CD8-positive, alpha-beta T cell (primary cell): ENCODE measurements at regions of chr10 and their contacts with region 1.

Region 1: DNA sequence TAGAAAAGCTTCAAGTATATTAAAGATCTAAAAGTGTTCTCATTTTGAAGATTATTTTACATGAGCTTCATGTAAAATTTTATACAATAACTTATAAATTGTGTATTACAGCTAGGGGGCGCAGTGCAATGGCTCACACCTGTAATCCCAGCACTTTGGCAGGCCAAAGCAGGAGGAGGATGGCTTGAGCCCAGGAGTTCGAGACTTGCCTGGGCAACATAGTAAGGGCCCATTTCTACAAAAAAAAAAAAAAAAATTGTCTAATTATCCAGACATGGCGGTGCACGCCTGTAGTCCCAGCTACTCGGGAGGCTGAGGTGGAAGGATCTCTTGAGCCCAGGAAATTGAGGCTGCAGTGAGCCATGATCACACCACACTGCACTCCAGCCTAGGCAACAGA is 16.6 kb downstream of the ACBD5 start:
- DNase-seq: peak in 8 of 9 experiments; percentile 13 to 75 (median 46)
- ATAC-seq: no peak
- H3K4me3 ChIP-seq: no peak overlapping the region
- H3K4me3 Mint-ChIP-seq: no peak overlapping the region
- H3K27ac ChIP-seq: peak overlapping the region in 1 of 2 experiments; percentile 20
- H3K27ac Mint-ChIP-seq: peak overlapping the region; percentile 52
- H3K4me1 ChIP-seq: peaks cover 17% of the 10 kb centered on the region
- H3K4me1 Mint-ChIP-seq: peaks cover 28% of the 10 kb centered on the region
- H3K27me3 ChIP-seq: no peaks in the 10 kb centered on the region
- H3K27me3 Mint-ChIP-seq: no peaks in the 10 kb centered on the region
- CTCF ChIP-seq: peak; percentile 84

Region 2: GRCh38 chr10:26890956-26891355 is 333.0 kb before region 1 on chr10:
- CTCF ChIA-PET with region 1: no interaction called
- POLR2A ChIA-PET with region 1: no interaction called
- intact Hi-C with region 1: loop called in 1 of 2 experiments (anchors 2 kb)
- DNase-seq: peak in 5 of 9 experiments; percentile 11 to 51 (median 42)
- ATAC-seq: no peak
- H3K4me3 ChIP-seq: no peak overlapping the region
- H3K4me3 Mint-ChIP-seq: no peak overlapping the region
- H3K27ac ChIP-seq: no peak overlapping the region
- H3K27ac Mint-ChIP-seq: no peak overlapping the region
- H3K4me1 ChIP-seq: no peaks in the 10 kb centered on the region
- H3K4me1 Mint-ChIP-seq: no peaks in the 10 kb centered on the region
- H3K27me3 ChIP-seq: no peaks in the 10 kb centered on the region
- H3K27me3 Mint-ChIP-seq: peaks cover under 1% of the 10 kb centered on the region
- CTCF ChIP-seq: no peak

Region 3: DNA sequence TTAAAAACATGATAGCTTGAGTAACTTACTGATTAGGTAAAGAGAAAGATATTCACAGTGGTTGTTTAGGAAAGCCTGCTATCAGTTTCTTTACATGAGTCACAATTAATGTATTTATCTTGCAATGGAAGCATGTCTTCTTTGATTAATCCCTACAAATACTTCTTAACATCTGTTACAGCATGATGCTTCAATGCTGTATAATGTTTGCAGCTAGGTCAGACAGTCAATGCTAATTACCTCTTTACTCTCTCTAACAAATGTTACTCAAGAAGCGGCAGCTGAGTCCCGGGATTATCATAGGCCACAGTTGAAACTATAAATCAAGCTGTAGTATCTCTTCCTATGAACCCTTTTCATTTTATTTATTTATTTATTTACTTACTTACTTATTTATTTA is 16.6 kb before region 1 on chr10:
- CTCF ChIA-PET with region 1: interaction called, 10 read pairs
- POLR2A ChIA-PET with region 1: no interaction called
- intact Hi-C with region 1: no loop called
- DNase-seq: no peak
- ATAC-seq: no peak
- H3K4me3 ChIP-seq: no peak overlapping the region
- H3K4me3 Mint-ChIP-seq: no peak overlapping the region
- H3K27ac ChIP-seq: no peak overlapping the region
- H3K27ac Mint-ChIP-seq: no peak overlapping the region
- H3K4me1 ChIP-seq: no peaks in the 10 kb centered on the region
- H3K4me1 Mint-ChIP-seq: no peaks in the 10 kb centered on the region
- H3K27me3 ChIP-seq: no peaks in the 10 kb centered on the region
- H3K27me3 Mint-ChIP-seq: no peaks in the 10 kb centered on the region
- CTCF ChIP-seq: no peak

Region 4: GRCh38 chr10:27252267-27253000 is 28.5 kb after region 1 on chr10:
- CTCF ChIA-PET with region 1: interaction called, 14 read pairs
- POLR2A ChIA-PET with region 1: no interaction called
- intact Hi-C with region 1: no loop called
- DNase-seq: peak; percentile 58 to 92 (median 81)
- ATAC-seq: peak; percentile 86
- H3K4me3 ChIP-seq: peak overlapping the region; percentile 55 to 69
- H3K4me3 Mint-ChIP-seq: peak overlapping the region; percentile 76
- H3K27ac ChIP-seq: peak overlapping the region; percentile 60 to 75
- H3K27ac Mint-ChIP-seq: peak overlapping the region; percentile 92
- H3K4me1 ChIP-seq: peaks cover 14% of the 10 kb centered on the region
- H3K4me1 Mint-ChIP-seq: peaks cover 12% of the 10 kb centered on the region
- H3K27me3 ChIP-seq: no peaks in the 10 kb centered on the region
- H3K27me3 Mint-ChIP-seq: no peaks in the 10 kb centered on the region
- CTCF ChIP-seq: peak; percentile 84

Region 5: DNA sequence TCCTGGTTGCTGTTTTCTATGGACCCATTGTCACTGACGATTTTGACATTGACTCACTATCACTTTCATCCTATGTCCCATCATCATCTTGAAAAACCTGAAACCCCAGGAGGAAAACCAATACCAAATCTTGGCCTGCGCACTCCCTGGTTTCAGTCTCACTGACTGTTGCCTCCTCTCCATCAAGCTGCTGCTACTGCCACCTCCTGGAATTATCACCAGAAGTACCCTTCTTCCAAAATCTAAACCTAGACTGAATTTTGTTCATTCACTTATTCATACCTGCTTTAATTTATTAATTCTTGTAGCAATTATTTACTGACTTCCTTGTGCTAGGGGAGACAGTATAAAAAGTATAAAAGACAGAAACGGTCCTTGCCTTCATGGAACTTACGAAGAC is 61.1 kb after region 1 on chr10:
- CTCF ChIA-PET with region 1: interaction called, 18 read pairs
- POLR2A ChIA-PET with region 1: interaction called, 3 read pairs
- intact Hi-C with region 1: loop called (anchors 1 kb)
- DNase-seq: peak in 7 of 9 experiments; percentile 6 to 71 (median 42)
- ATAC-seq: peak; percentile 73
- H3K4me3 ChIP-seq: no peak overlapping the region
- H3K4me3 Mint-ChIP-seq: no peak overlapping the region
- H3K27ac ChIP-seq: no peak overlapping the region
- H3K27ac Mint-ChIP-seq: no peak overlapping the region
- H3K4me1 ChIP-seq: no peaks in the 10 kb centered on the region
- H3K4me1 Mint-ChIP-seq: peaks cover 3% of the 10 kb centered on the region
- H3K27me3 ChIP-seq: no peaks in the 10 kb centered on the region
- H3K27me3 Mint-ChIP-seq: no peaks in the 10 kb centered on the region
- CTCF ChIP-seq: peak; percentile 59

Region 6: GRCh38 chr10:27360581-27361172 is 136.7 kb after region 1 on chr10:
- CTCF ChIA-PET with region 1: interaction called, 27 read pairs
- POLR2A ChIA-PET with region 1: no interaction called
- intact Hi-C with region 1: loop called (anchors 1 kb)
- DNase-seq: peak; percentile 63 to 89 (median 83)
- ATAC-seq: peak; percentile 99
- H3K4me3 ChIP-seq: no peak overlapping the region
- H3K4me3 Mint-ChIP-seq: no peak overlapping the region
- H3K27ac ChIP-seq: no peak overlapping the region
- H3K27ac Mint-ChIP-seq: no peak overlapping the region
- H3K4me1 ChIP-seq: no peaks in the 10 kb centered on the region
- H3K4me1 Mint-ChIP-seq: no peaks in the 10 kb centered on the region
- H3K27me3 ChIP-seq: no peaks in the 10 kb centered on the region
- H3K27me3 Mint-ChIP-seq: no peaks in the 10 kb centered on the region
- CTCF ChIP-seq: peak; percentile 99

Region 7: DNA sequence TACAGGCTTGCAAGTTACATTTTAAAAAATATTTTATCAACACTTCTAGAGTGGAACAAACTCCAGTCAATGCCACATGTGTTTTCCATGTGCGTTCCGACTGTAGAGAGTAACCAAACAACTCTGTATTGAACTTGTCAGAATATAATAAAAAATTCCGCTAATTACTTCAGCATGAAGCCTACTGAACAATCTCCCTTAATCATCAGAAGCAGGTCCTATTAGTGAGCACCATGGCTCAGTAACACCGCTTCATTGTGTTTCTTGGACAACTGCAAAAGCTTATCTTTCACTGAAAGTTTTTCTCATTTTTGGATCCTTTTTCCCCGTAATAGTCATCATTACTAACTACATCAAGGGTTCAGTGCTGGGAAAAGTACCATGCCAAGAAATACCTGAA is 404.7 kb after region 1 on chr10:
- CTCF ChIA-PET with region 1: no interaction called
- POLR2A ChIA-PET with region 1: no interaction called
- intact Hi-C with region 1: no loop called
- DNase-seq: no peak
- ATAC-seq: no peak
- H3K4me3 ChIP-seq: no peak overlapping the region
- H3K4me3 Mint-ChIP-seq: no peak overlapping the region
- H3K27ac ChIP-seq: no peak overlapping the region
- H3K27ac Mint-ChIP-seq: no peak overlapping the region
- H3K4me1 ChIP-seq: no peaks in the 10 kb centered on the region
- H3K4me1 Mint-ChIP-seq: no peaks in the 10 kb centered on the region
- H3K27me3 ChIP-seq: peaks cover 0 to 3% of the 10 kb centered on the region in 2 experiments
- H3K27me3 Mint-ChIP-seq: peaks cover 10% of the 10 kb centered on the region
- CTCF ChIP-seq: no peak